CD4-positive, alpha-beta memory T cell (primary cell): ENCODE measurements at regions of chr13 and their contacts with region 1.

Region 1: GRCh38 chr13:42969558-42970172 is 22.4 kb downstream of the EPSTI1 start:
- DNase-seq: peak; percentile 73 to 77 (median 75)
- H3K4me3 ChIP-seq: no peak overlapping the region
- H3K4me3 Mint-ChIP-seq: peak overlapping the region in 1 of 8 donors; percentile 34
- H3K27ac ChIP-seq: no peak overlapping the region
- H3K27ac Mint-ChIP-seq: peak overlapping the region in 5 of 7 donors; percentile 0 to 77 (median 16)
- H3K4me1 ChIP-seq: peaks cover 26% of the 10 kb centered on the region
- H3K4me1 Mint-ChIP-seq: peaks cover 15 to 28% (median 21%) of the 10 kb centered on the region in 4 donors
- H3K27me3 ChIP-seq: no peaks in the 10 kb centered on the region
- H3K27me3 Mint-ChIP-seq: no peaks in the 10 kb centered on the region

Region 2: DNA sequence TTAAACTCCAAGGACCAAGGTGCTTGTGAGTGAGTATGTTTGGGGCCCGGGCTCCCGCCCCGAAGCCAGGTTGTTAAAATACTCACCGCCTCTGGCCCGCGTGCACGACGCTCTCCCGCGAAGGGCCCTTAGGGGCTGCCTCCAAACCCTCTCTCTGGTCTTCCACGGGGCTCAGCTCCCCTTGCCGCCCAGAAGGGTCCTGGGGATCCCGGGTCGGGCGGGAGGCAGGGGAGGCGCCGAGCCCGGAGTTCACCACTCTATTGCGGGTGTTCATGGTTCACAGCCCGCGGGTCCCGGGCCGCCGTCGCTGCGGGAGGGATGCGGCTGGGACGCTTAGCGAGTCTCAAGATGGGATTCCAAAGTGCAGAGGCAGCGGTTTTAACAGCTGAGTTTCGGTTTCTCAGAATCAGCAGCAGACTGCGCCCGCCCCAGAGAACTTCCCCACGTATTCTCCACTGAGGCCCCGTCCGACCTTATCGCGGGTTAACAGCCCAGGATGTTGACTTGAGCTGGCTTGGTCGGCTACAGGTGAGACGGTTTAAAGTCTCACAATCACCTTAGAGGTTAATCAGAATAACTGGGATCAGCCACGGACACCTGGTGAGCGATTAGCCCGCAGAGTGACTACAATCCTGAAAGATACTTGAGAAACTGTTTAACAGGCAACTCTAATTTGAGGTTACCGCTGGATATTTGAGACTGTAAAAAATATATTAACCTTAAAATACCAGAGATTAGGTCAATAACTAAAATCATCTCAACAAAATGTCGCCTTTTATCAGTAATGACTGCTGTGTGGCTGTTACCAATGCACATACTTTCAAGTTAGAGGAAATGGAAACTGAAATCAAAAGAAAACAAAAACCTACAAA is 22.5 kb after region 1 on chr13 and contains the start of gene EPSTI1:
- CTCF ChIA-PET with region 1: interaction called, 39 read pairs
- POLR2A ChIA-PET with region 1: interaction called, 23 read pairs
- intact Hi-C with region 1: loop called (anchors 1 kb)
- DNase-seq: peak; percentile 79 to 84 (median 81)
- H3K4me3 ChIP-seq: peak within 1 kb of the TSS; percentile 73 to 88
- H3K4me3 Mint-ChIP-seq: peak within 1 kb of the TSS; percentile 93 to 97 (median 96)
- H3K27ac ChIP-seq: peak within 1 kb of the TSS; percentile 95
- H3K27ac Mint-ChIP-seq: peak within 1 kb of the TSS; percentile 99 to 100 (median 99)
- H3K4me1 ChIP-seq: peaks cover 40% of the 10 kb centered on the region
- H3K4me1 Mint-ChIP-seq: peaks cover 35 to 63% (median 41%) of the 10 kb centered on the region in 4 donors
- H3K27me3 ChIP-seq: no peaks in the 10 kb centered on the region
- H3K27me3 Mint-ChIP-seq: no peaks in the 10 kb centered on the region
- total RNA-seq, gene EPSTI1: 17.1 to 19.4 TPM

Region 3: GRCh38 chr13:43074824-43075510 is 105.3 kb after region 1 on chr13:
- CTCF ChIA-PET with region 1: interaction called, 12 read pairs
- POLR2A ChIA-PET with region 1: interaction called, 4 read pairs
- intact Hi-C with region 1: no loop called
- DNase-seq: no peak
- H3K4me3 ChIP-seq: no peak overlapping the region
- H3K4me3 Mint-ChIP-seq: peak overlapping the region; percentile 31 to 83 (median 66)
- H3K27ac ChIP-seq: no peak overlapping the region
- H3K27ac Mint-ChIP-seq: peak overlapping the region; percentile 7 to 87 (median 83)
- H3K4me1 ChIP-seq: peaks cover 27% of the 10 kb centered on the region
- H3K4me1 Mint-ChIP-seq: peaks cover 12 to 54% (median 40%) of the 10 kb centered on the region in 4 donors
- H3K27me3 ChIP-seq: no peaks in the 10 kb centered on the region
- H3K27me3 Mint-ChIP-seq: no peaks in the 10 kb centered on the region

Region 4: GRCh38 chr13:43132257-43132656 is 162.6 kb after region 1 on chr13:
- CTCF ChIA-PET with region 1: interaction called, 22 read pairs
- POLR2A ChIA-PET with region 1: interaction called, 3 read pairs
- intact Hi-C with region 1: loop called (anchors 1 kb)
- DNase-seq: no peak
- H3K4me3 ChIP-seq: no peak overlapping the region
- H3K4me3 Mint-ChIP-seq: no peak overlapping the region
- H3K27ac ChIP-seq: no peak overlapping the region
- H3K27ac Mint-ChIP-seq: no peak overlapping the region
- H3K4me1 ChIP-seq: no peaks in the 10 kb centered on the region
- H3K4me1 Mint-ChIP-seq: peaks cover 8 to 13% (median 11%) of the 10 kb centered on the region in 4 donors
- H3K27me3 ChIP-seq: no peaks in the 10 kb centered on the region
- H3K27me3 Mint-ChIP-seq: peaks cover 10 to 13% of the 10 kb centered on the region in 2 donors